Dorsolateral prefrontal cortex (tissue), 120 donors: ENCODE measurements at regions of chr9 and their contacts with region 1.

Region 1: GRCh38 chr9:85258823-85259370 is 482.9 kb downstream of the AGTPBP1 start:
- DNase-seq: peak; percentile 52 to 90 (median 84)
- H3K4me3 ChIP-seq: peak overlapping the region in 33 of 59 donors; percentile 4 to 55 (median 31)
- H3K27ac ChIP-seq: peak overlapping the region in 13 of 59 donors; percentile 0 to 57 (median 34)
- H3K27me3 ChIP-seq: no peaks in the 10 kb centered on the region
- CTCF ChIP-seq: peak; percentile 30 to 93 (median 82)

Region 2: DNA sequence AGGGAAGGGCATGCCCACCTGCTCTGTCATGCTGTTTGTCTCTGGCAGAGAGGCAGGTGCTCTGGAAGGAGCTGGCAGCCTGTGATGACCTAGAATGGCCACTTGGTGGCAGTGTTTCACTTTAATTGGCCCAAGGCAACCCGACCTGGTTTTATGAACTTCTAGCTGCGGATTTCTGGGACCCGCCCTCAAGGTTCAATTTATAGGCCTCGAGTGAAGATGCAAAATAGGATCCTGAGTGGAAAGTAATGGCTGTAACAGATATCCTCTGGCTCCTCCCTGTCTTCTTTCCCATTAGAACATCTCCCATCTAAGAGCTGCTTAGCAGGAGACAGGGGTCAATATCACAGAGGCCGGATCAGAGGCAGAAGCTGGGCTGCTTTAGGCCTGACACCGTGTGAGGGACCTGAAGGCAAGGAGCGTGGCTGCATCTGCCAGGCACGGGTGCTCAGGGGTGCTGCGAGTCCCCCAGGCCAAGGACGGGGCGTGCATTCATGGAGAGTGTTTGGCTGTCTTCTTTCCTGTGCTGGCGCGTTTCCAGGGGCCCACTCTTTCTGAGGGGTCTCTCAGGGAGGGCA is 861.7 kb before region 1 on chr9:
- intact Hi-C with region 1: loop called in 1 of 2 experiments (anchors 10 kb)
- DNase-seq: peak; percentile 47 to 82 (median 70)
- H3K4me3 ChIP-seq: peak overlapping the region in 3 of 59 donors; percentile 7 to 18 (median 11)
- H3K27ac ChIP-seq: peak overlapping the region in 2 of 59 donors; percentile 16 to 21
- H3K27me3 ChIP-seq: peaks cover 0 to 3% (median 0%) of the 10 kb centered on the region in 45 donors
- CTCF ChIP-seq: peak; percentile 78 to 99 (median 96)

Region 3: DNA sequence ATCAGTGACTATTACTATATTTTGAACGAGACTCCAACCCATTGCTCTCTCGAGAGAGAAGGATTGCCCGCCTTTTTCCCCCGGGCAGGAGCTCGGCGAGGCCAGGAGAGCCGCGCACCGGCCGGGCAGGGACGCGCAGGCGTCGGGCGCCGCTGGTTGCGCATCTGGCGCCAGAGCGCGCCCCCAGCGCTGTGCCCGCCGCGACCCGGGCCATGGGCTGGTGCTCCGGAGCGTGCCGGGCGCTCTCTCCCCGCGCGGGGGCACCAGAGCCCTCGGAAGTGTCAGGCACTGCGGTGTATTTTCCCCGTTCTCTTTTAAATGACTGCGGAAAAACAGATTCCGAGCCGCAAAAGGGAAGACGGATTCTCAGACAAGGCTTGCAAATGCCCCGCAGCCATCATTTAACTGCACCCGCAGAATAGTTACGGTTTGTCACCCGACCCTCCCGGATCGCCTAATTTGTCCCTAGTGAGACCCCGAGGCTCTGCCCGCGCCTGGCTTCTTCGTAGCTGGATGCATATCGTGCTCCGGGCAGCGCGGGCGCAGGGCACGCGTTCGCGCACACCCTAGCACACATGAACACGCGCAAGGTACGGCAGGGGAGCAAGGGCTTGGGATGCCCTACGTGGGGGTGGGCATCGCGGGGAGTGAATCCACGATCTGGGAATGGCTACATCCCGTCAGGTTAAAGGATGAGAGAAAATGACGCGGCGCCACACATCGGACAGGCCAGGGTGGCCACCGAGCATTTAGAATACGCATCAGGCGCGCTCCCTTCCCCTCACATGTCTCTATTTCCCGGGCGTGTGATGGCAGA is 590.5 kb before region 1 on chr9:
- intact Hi-C with region 1: loop called (anchors 2 to 10 kb)
- DNase-seq: peak; percentile 74 to 90 (median 86)
- H3K4me3 ChIP-seq: peak overlapping the region; percentile 65 to 90 (median 81)
- H3K27ac ChIP-seq: peak overlapping the region; percentile 82 to 99 (median 97)
- H3K27me3 ChIP-seq: no peaks in the 10 kb centered on the region
- CTCF ChIP-seq: peak; percentile 55 to 91 (median 75)

Region 4: GRCh38 chr9:84990102-84990815 is 268.6 kb before region 1 on chr9:
- intact Hi-C with region 1: loop called in 1 of 2 experiments (anchors 10 kb)
- DNase-seq: peak in 9 of 10 donors; percentile 46 to 87 (median 68)
- H3K4me3 ChIP-seq: peak overlapping the region in 11 of 59 donors; percentile 3 to 21 (median 11)
- H3K27ac ChIP-seq: peak overlapping the region; percentile 60 to 99 (median 93)
- H3K27me3 ChIP-seq: no peaks in the 10 kb centered on the region
- CTCF ChIP-seq: no peak

Region 5: DNA sequence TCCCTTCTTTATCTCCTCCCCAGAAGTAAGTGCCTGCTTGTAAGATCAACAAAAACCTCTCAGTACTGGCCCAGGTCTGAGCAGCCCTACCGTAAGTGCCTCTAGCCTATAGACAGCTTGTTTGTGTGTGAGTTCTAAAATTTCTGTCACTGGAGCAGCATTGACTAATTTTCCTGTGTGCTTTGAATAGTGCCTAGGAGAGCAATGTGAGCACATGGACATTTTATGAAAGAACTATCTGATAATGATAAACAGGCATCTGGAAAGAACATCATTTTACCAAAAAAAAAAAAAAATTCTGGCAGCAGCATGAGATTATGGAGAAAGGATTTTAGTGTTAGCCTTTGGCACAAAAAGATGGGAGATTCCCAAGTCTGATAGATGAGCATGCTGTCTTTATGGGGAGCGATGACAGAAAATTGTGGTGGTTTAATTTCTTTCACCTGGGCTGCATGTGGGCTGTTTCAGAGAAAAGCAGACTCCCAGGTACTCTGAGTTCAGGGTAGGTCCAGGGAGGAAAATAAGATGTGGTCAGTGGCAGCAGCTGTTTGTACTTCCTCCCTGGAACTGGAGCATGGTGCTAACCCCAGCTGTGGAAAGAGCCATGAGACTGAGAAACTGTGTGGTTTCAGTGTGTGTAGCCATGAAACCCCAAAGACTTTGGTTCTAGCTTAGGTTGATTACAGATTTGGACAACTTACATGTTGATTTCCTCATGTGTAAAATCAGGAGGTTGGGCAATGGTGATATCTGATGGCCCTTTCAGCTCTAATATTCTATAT is 169.5 kb before region 1 on chr9:
- intact Hi-C with region 1: no loop called
- DNase-seq: no peak
- H3K4me3 ChIP-seq: no peak overlapping the region
- H3K27ac ChIP-seq: no peak overlapping the region
- H3K27me3 ChIP-seq: no peaks in the 10 kb centered on the region
- CTCF ChIP-seq: no peak

Region 6: GRCh38 chr9:85142968-85143367 is 115.9 kb before region 1 on chr9:
- intact Hi-C with region 1: loop called in 1 of 2 experiments (anchors 10 kb)
- DNase-seq: no peak
- H3K4me3 ChIP-seq: no peak overlapping the region
- H3K27ac ChIP-seq: peak overlapping the region in 8 of 59 donors; percentile 2 to 55 (median 31)
- H3K27me3 ChIP-seq: no peaks in the 10 kb centered on the region
- CTCF ChIP-seq: peak; percentile 31 to 79 (median 63)

Region 7: DNA sequence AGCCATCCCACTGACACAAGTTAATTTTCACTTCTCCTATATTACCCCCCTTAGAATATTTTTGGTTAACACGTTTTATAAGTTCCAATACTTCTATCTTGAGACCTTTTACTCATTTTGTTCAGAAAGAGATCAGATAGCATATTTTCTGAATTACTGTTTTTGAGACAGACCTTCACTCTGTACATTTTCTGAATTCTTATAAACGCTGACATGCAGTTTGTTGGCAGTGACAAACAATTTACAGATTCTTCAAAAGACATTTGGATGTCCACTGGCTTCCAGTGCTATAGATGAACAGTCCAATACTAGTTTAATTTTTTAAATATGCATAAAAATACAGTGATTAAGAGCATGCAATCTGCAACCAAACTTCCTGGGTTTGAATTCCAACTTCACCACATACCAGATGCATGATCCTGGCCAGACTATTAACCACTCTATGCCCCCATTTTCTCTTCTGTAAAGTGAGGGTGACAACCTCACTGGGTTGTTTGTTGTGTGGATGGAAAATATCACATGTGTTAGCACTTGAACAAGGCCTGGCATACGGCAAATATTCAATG is 340.7 kb after region 1 on chr9:
- intact Hi-C with region 1: no loop called
- DNase-seq: no peak
- H3K4me3 ChIP-seq: no peak overlapping the region
- H3K27ac ChIP-seq: peak overlapping the region in 21 of 59 donors; percentile 2 to 70 (median 27)
- H3K27me3 ChIP-seq: no peaks in the 10 kb centered on the region
- CTCF ChIP-seq: no peak

Region 8: DNA sequence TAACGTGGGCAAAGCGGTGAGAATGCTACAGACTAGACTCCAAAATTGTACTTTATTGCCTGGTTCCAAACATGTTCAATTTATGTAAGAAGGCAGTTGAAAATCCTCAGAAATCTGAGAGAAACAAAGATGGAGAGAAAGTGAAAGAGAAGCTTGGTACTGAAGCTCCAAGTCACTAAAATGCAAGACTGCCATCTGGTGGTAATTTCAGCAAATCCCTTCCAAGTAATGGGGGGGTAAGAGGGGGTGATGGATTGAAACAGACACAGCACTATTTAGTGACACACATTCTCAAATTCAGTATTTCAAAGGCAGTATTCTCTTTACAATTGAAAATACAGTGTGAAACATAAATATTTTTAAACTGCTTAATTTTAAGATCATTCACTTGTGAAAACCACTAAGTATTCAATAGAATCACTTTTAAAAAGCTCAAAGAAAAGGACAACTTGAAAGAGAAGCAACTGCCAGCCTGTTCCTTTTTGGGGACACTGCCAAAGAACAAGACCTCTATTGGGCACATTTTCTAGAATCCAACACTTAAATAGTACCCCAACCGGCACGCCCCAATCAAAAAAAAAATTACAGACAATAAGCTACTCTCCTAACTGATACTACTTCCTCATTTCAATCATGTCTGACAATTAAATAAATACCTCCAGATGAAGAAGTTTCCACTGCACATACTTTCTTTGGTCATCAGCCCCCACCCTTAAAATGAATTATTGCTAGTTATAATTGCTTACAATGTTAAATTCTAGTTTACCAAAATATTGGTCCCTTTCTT is 351.4 kb after region 1 on chr9:
- intact Hi-C with region 1: loop called in 1 of 2 experiments (anchors 5 kb)
- DNase-seq: peak in 2 of 10 donors; percentile 44 to 45
- H3K4me3 ChIP-seq: peak overlapping the region in 54 of 59 donors; percentile 4 to 55 (median 39)
- H3K27ac ChIP-seq: peak overlapping the region; percentile 61 to 98 (median 93)
- H3K27me3 ChIP-seq: no peaks in the 10 kb centered on the region
- CTCF ChIP-seq: peak; percentile 67 to 96 (median 87)